ENCODE measurements at regions of chr19 and their contacts with region 1.

Region 1: DNA sequence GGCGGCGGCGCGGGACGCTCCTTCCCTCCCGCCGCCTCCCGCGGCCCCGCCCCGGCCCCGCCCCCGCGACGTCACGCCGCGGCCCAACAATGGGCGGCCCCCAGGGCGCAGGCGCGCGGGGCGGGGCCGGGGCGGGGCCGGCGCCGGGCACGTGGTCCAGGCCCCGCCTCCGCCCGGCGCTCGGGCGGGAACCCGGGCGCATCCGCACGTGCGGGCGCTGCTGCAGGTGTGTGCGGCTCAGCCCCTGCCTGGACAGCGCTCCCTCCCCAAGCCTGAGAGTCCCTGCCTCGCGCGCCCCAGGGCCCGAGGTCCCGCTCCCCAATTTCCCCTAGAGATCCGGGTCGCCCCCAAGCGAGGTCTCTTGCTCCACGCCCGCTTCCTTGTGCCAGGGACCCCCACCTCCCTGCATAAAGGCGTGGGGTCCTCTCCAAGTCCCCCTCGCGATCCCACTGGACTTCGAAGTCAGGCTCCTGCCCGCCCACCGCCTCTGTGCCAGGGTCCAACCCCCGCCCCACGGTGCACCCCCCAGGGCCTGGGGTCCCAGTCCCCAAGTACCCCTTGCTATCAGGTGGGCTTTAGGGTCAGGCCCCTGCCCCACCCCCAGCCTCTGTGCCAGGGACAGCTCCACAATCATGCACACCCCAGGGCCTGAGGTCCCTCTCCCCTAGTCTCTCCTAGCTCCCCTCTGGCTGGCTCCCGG is at the start of gene MEX3D:
- DNase-seq: peak; percentile 90
- ATAC-seq: peak; percentile 88
- H3K4me3 Mint-ChIP-seq: no peak within 1 kb of the TSS
- H3K27ac Mint-ChIP-seq: no peak within 1 kb of the TSS
- H3K4me1 Mint-ChIP-seq: no peaks in the 10 kb centered on the region
- H3K27me3 Mint-ChIP-seq: peaks cover 7% of the 10 kb centered on the region
- total RNA-seq, gene MEX3D: 6.2 to 6.7 TPM

Region 2: DNA sequence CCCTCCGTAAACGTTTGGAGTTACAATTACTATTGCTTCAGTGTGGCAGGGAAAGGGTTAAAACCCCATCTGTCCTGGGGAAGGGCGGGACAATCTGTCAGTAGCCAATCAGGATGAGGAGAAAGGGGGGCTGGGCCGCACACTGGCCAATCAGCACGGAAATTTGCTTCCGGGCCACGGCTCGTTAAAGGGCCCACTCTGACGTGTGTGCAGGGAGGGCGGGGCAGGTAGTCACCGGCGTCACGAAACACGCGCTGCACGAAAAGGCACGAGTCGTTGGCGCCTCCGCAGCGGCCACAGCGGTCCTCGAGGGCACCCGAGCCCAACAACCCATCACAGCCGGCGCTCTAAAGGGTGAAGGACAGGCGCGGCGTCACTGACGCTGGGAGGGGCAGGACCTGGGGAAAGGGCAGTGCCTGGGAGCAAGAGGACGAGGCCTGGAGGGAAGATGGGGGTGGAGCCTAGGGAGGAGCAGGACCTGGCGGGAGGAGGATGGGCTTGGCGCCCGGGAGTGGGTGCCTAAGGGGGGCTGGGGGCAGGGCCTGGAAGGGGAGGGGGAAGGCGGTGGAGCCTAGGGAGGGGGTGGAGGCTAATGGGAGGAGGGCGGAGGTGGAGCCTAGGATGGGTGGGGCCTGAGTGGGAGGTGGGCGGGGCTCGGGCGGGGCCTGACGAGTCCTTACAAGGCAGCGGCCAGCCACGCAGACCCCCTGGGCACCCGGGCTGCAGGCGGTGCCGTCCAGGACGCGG is 60.5 kb before region 1 on chr19:
- CTCF ChIA-PET with region 1: no interaction called
- POLR2A ChIA-PET with region 1: no interaction called
- intact Hi-C with region 1: loop called in 1 of 2 experiments (anchors 1 kb)
- DNase-seq: peak; percentile 95
- ATAC-seq: peak; percentile 87
- H3K4me3 Mint-ChIP-seq: peak overlapping the region; percentile 73
- H3K27ac Mint-ChIP-seq: peak overlapping the region; percentile 88
- H3K4me1 Mint-ChIP-seq: peaks cover 16% of the 10 kb centered on the region
- H3K27me3 Mint-ChIP-seq: no peaks in the 10 kb centered on the region

Region 3: DNA sequence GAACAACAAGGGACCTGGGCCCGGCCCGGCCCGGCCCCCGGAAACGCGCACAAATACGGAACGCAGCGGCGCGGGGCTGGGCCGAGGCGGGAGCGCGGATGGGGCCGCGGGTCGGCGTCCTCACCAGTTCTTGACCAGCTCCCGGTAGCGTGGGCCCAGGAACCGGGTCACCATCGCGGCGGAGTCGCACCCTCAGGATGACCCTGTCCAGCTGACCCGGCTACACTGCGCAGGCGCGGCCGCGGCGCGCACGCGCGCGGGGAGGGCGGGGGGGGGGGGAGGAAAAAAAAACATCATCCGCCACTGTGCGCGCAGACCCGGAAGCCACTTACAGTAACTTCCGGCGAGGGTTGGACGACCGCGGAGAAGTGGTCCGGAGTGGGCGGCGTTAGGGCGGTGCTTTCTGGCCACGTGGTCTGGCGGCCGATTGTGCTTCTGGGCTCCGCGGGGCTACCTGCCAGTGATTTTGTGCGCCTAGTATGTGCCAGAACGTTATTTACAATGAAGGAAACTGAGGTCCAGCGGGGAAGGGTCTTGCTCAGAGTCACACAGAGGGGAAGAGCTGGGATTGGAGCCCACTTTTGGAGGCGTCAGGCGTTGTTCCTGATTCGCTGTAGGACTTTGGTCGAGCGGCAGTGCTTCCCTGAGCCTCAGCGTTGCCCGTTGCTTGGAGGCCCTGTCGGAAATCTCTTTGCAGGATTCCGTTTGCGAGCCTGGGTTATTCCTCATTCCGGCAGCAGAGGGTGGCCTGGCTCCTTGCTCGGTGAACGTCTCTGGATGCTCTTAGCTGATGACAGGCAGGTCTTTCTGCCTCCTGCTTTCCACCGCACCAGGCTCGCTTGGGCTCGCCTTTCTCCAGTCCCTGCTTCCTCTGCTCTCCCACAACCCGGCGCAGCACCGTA is 37.0 kb after region 1 on chr19 and contains the start of gene UQCR11:
- CTCF ChIA-PET with region 1: interaction called, 3 read pairs
- POLR2A ChIA-PET with region 1: no interaction called
- intact Hi-C with region 1: loop called in 1 of 2 experiments (anchors 1 kb)
- DNase-seq: peak; percentile 96
- ATAC-seq: peak; percentile 89
- H3K4me3 Mint-ChIP-seq: peak within 1 kb of the TSS; percentile 97
- H3K27ac Mint-ChIP-seq: peak within 1 kb of the TSS; percentile 99
- H3K4me1 Mint-ChIP-seq: peaks cover 52% of the 10 kb centered on the region
- H3K27me3 Mint-ChIP-seq: no peaks in the 10 kb centered on the region
- total RNA-seq, gene UQCR11: 152 to 226 TPM

Measured in activated CD4-positive, alpha-beta T cell treated with anti-CD3 and anti-CD28 coated beads for 36 hours (primary cell).